Gastrocnemius medialis (tissue), 4 donors: ENCODE measurements at regions of chr12 and their contacts with region 1.

Region 1: GRCh38 chr12:11798856-11799501 is 149.5 kb downstream of the ETV6 start:
- DNase-seq: no peak
- ATAC-seq: no peak
- H3K4me3 ChIP-seq: no peak overlapping the region
- H3K27ac ChIP-seq: peak overlapping the region in 1 of 4 donors; percentile 85
- H3K4me1 ChIP-seq: peaks cover 45 to 46% of the 10 kb centered on the region in 2 donors
- H3K27me3 ChIP-seq: no peaks in the 10 kb centered on the region
- CTCF ChIP-seq: no peak
- POLR2A ChIP-seq: no peak

Region 2: DNA sequence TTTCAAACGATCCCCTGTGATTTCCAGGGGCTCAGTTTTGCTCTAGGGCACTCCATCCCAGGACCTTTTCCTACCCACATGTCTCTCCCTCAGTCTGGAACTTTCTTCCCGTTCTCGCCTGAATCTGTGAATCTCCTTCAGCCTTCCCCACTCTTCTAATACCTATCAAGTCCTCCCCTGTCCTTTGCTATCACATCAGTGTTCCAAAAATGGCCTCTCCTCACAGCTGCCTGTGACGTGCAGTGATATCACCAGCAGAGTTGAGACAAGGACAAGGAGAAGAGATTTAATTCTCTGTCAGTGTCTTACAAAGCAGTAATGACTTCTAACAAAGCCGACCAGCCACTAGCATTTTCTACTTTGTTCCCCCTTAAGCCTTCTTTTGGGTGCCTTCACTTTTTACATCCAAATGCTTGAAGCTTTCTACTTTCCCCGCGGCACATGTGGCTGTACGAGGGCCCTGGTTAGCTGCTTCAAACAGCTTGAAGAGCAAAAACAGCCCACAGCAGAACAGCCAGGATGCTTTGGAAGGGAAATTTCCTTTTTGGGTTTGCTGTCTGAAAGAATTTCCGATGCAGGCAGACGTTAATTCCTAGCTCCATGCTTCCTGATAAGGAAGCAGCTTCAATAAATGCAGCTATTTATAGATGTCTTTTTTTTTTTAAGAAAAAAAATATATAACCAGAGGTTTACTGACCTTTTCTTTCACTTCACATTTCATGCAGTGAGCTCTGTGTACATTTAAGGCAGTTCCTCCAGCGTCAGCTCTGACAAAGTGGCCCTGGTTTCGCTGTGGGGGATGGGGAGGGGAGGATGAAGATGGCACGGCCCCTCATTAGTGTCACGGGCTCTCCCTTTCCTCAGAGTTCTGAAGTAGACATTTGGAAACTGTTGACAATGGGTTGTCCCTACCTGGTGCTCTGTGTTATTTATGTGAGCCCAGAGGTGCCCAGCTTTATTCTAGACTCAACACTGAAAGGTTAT is 40.2 kb before region 1 on chr12:
- in situ Hi-C with region 1: no loop called
- intact Hi-C with region 1: loop called (anchors 5 kb)
- DNase-seq: no peak
- ATAC-seq: peak; percentile 34 to 40
- H3K4me3 ChIP-seq: no peak overlapping the region
- H3K27ac ChIP-seq: peak overlapping the region; percentile 58 to 73 (median 67)
- H3K4me1 ChIP-seq: peaks cover 35 to 51% of the 10 kb centered on the region in 2 donors
- H3K27me3 ChIP-seq: no peaks in the 10 kb centered on the region
- CTCF ChIP-seq: no peak
- POLR2A ChIP-seq: no peak

Region 3: GRCh38 chr12:12010277-12011039 is 211.5 kb after region 1 on chr12:
- in situ Hi-C with region 1: no loop called
- intact Hi-C with region 1: loop called (anchors 10 kb)
- DNase-seq: peak; percentile 16 to 41
- ATAC-seq: peak in 1 of 2 donors; percentile 41
- H3K4me3 ChIP-seq: no peak overlapping the region
- H3K27ac ChIP-seq: no peak overlapping the region
- H3K4me1 ChIP-seq: peaks cover 0 to 2% of the 10 kb centered on the region in 2 donors
- H3K27me3 ChIP-seq: no peaks in the 10 kb centered on the region
- CTCF ChIP-seq: no peak
- POLR2A ChIP-seq: no peak